ENCODE measurements at regions of chr5 and their contacts with region 1.

Region 1: DNA sequence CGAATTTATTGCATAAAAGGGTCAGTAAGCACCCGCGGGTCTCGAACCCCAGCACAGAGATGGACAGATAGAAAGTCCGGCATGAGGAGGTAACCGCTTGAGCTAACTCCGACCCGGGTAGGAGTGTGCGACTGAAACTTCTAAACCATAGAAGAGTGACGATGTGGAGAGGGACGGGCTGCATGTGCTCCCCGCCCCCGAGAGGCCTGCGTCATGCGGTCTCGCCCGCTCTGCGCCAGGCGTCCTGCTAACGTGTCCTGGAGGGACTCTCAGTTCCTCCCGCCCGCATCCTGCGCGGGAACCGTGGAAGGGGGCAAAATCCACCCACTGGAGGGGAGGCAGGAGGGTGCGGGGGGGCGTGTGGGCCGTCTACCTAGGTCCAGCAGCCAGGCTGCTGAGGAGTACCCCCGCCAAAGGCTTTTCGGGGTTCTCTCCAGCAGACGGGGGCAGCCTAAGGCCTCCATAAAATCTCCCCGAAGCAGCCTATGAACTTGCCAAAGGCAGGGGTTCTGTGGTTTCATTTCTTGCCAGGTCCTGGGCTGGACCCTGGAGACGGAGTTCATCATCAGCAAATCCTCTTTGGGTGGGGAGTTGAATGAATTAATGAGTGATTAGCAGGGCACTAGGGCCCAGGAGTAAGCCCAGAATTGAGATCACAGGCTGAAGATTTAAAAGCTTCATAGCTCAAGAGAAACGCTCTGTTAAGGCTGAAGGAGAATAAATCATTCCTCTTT is 51.9 kb downstream of the TGFBI start:
- DNase-seq: no peak
- H3K4me3 ChIP-seq: peak overlapping the region; percentile 38 to 48
- H3K27ac ChIP-seq: peak overlapping the region; percentile 70
- H3K4me1 ChIP-seq: peaks cover 8% of the 10 kb centered on the region
- H3K27me3 ChIP-seq: no peaks in the 10 kb centered on the region
- CTCF ChIP-seq: no peak
- POLR2A ChIP-seq: peak in 1 of 2 donors; percentile 54

Region 2: DNA sequence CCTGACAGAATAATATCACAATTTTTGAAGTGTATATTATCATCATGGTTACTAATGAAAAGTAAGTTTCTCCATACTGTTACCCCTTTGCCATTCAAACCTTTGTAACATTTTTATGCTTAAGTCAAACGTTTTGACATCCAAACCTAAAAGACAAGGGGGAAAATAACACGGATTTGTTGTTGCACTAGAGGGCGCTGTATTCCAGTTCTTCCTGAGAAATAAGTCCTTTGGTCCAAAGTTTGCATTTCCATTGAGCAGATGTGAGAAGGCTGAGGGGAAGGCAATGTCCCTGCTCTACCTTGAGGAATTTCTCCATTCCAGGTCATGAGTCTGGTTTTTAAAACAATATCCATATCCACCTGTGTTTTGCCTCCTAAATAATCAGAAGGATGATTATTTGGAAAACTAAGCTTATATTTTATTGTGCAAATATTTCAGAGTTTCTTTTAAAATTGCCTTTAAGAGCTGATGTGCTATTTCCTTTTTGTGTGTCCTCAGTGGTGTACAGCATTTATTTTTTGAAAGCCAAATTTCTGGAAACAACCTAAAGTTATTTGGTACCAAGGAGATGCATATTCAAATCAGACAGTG is 135.6 kb before region 1 on chr5:
- intact Hi-C with region 1: loop called (anchors 5 kb)
- DNase-seq: no peak
- H3K4me3 ChIP-seq: no peak overlapping the region
- H3K27ac ChIP-seq: no peak overlapping the region
- H3K4me1 ChIP-seq: no peaks in the 10 kb centered on the region
- H3K27me3 ChIP-seq: no peaks in the 10 kb centered on the region
- CTCF ChIP-seq: peak; percentile 79 to 82 (median 81)
- POLR2A ChIP-seq: no peak